ENCODE measurements at regions of chr22 and their contacts with region 1.

Region 1: GRCh38 chr22:41140365-41140957 is 48.1 kb downstream of the EP300 start:
- DNase-seq: no peak

Region 2: DNA sequence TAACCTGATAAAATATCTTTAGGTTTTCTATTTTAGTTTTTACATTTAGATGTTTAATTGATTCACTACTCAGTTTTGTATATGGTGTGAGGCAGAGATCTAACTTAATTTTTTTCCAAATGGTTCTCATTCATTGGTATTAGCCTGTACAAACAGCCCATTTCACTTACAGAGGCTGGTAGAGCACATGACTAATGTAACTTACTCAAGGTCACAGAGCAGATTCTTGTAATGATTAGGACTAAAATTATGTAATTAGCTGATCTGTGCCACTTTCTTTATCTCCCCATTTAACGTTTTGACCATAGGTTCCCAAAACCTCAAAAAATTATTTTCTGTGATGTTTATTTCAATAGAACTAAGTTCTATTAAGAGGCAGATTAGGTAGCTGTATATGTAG is 979.3 kb before region 1 on chr22:
- intact Hi-C with region 1: no loop called
- DNase-seq: no peak

Region 3: GRCh38 chr22:40908895-40909294 is 231.6 kb before region 1 on chr22:
- intact Hi-C with region 1: loop called in 1 of 2 experiments (anchors 5 kb)
- DNase-seq: no peak

Region 4: GRCh38 chr22:41902932-41903421 is 762.5 kb after region 1 on chr22:
- intact Hi-C with region 1: no loop called
- DNase-seq: no peak

Measured in posterior vena cava (tissue), 2 donors.